ENCODE measurements at regions of chr16 and their contacts with region 1.

Region 1: DNA sequence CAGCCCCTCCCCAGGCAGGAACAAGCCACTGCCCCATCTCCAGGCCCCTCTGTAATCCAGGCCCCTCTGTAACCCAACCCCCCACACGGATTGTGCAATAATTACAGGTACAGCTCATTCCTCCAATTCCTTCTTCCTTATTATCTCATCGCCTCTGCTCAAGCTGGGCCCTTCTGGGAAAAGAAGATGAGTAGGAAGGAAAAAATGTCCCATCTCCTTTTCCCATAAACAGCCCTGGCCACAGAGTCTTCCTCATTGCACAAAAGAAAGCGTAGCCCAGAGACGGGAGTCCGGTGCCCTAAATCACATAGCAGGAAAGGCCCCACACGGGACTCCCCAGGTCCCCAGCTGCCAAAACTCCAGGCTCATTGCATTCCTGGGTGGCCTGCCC is 3.6 kb upstream of the LITAFD start:
- DNase-seq: no peak
- H3K4me3 ChIP-seq: no peak overlapping the region
- H3K27ac ChIP-seq: no peak overlapping the region
- H3K4me1 ChIP-seq: no peaks in the 10 kb centered on the region
- H3K27me3 ChIP-seq: peaks cover 0 to 2% of the 10 kb centered on the region in 2 experiments
- CTCF ChIP-seq: no peak
- POLR2A ChIP-seq: no peak

Region 2: DNA sequence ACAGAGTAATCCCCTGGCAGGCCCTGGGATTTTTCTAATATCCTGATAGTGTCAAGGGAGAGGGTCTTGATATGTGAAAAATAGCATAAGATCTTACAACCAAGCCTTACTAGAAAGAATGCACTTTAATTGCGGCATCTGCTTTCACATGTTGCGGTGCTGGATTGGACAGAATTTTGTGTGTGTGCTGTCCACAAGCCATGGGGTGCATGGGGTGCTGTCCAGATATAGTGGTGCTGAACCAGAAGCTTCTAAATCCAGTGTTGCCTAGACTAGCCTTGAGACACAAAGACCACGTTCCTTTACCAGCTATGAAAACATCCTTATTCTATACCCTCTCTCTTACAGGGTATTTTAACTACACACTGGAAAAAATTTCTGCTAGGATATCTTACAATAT is 532.2 kb before region 1 on chr16:
- CTCF ChIA-PET with region 1: no interaction called
- POLR2A ChIA-PET with region 1: no interaction called
- dilution Hi-C with region 1: no loop called
- intact Hi-C with region 1: no loop called
- DNase-seq: no peak
- H3K4me3 ChIP-seq: no peak overlapping the region
- H3K27ac ChIP-seq: no peak overlapping the region
- H3K4me1 ChIP-seq: no peaks in the 10 kb centered on the region
- H3K27me3 ChIP-seq: no peaks in the 10 kb centered on the region
- CTCF ChIP-seq: no peak
- POLR2A ChIP-seq: no peak

Region 3: GRCh38 chr16:8567750-8568617 is 310.5 kb before region 1 on chr16:
- CTCF ChIA-PET with region 1: interaction called, 16 read pairs
- POLR2A ChIA-PET with region 1: no interaction called
- dilution Hi-C with region 1: no loop called
- intact Hi-C with region 1: loop called (anchors 1 kb)
- DNase-seq: peak; percentile 85
- H3K4me3 ChIP-seq: no peak overlapping the region
- H3K27ac ChIP-seq: no peak overlapping the region
- H3K4me1 ChIP-seq: no peaks in the 10 kb centered on the region
- H3K27me3 ChIP-seq: peaks cover 2 to 3% of the 10 kb centered on the region in 2 experiments
- CTCF ChIP-seq: peak; percentile 87 to 97
- POLR2A ChIP-seq: no peak

Region 4: DNA sequence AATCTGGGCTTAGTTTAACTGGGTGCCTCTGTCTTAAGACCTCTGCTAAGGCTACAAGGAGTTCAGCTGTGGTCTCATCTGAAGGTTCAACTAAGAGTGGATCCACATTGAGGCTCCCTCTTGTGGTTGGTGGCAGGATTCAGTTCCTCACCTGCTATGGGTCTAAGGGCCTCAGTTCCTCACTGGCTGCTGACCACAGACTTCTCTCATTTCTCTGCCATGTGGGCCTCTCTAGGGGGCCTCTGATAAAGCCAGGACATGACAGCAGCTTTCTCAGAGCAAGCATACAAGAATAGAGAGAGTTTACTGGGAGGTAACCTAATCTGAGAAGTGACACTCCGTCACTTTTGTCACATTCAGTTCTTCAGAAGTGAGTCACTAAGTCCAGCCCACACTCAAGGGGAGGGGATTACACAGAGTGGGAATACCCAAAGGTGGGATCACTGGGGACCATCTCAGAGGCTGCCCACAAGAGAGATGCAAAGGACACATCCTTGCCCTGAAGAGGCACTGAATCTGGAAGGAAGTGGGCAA is 223.3 kb before region 1 on chr16:
- CTCF ChIA-PET with region 1: interaction called, 92 read pairs
- POLR2A ChIA-PET with region 1: no interaction called
- dilution Hi-C with region 1: no loop called
- intact Hi-C with region 1: no loop called
- DNase-seq: peak; percentile 13
- H3K4me3 ChIP-seq: no peak overlapping the region
- H3K27ac ChIP-seq: no peak overlapping the region
- H3K4me1 ChIP-seq: no peaks in the 10 kb centered on the region
- H3K27me3 ChIP-seq: peaks cover 0 to 6% of the 10 kb centered on the region in 2 experiments
- CTCF ChIP-seq: peak; percentile 52 to 58
- POLR2A ChIP-seq: no peak

Region 5: DNA sequence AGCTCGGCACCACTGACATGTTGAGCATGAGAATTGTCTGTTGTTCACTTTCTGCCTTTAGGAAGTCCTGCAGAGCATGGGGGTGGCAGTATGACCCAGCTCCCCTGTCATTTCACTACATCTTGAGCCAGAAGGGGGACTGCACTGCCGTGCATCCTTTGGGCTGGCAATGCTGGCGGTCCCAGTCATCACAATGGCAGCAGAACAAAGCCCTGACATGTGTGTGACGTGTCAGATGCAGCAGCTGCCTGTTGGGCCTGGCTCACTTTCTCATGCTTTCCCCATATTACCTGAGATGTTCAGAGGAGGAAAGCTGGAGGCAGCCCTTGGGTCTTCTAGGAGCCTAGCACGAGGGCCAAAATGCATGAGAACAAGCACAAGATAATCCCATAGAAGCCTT is 210.4 kb before region 1 on chr16:
- CTCF ChIA-PET with region 1: interaction called, 92 read pairs
- POLR2A ChIA-PET with region 1: no interaction called
- dilution Hi-C with region 1: no loop called
- intact Hi-C with region 1: no loop called
- DNase-seq: no peak
- H3K4me3 ChIP-seq: no peak overlapping the region
- H3K27ac ChIP-seq: no peak overlapping the region
- H3K4me1 ChIP-seq: no peaks in the 10 kb centered on the region
- H3K27me3 ChIP-seq: no peaks in the 10 kb centered on the region
- CTCF ChIP-seq: no peak
- POLR2A ChIP-seq: no peak

Region 6: DNA sequence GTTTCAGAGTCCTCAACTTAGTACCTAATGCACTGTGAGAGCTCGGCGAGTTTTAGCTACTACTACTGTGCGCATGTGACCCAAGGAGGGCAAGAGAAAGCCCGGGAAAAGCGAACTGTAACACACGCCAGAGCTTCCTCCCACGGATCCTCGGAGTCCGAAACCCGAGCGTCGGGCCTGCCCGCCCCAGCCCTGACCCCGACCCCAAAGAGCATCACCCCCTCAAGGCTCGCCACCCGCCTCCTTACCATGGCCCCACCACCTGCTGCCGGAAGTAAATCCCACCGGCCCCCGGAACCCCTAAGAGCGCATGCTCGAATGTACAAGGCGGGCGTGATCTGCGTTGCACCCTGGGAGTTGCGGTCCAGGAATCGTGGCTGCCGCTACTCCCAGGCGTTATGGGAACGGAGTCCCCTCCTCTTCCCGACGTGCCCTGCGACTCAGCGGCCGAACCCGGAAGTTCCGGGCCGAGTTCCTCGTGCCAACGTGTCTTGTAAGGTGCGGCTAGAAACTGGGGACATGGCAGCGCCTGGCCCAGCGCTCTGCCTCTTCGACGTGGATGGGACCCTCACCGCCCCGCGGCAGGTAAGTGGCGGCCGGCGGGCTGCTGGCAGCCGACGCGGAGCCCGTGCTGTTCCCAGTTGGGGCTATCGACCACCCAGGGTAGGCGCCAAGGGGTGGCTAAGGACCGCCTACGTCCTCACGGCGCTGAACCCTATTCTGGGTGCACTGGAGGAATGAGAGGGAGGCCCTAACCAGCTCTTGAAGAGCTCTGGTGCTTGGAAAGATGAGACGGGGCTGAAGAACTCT is 80.9 kb before region 1 on chr16 and contains the starts of genes PMM2 and TMEM186:
- CTCF ChIA-PET with region 1: interaction called, 18 read pairs
- POLR2A ChIA-PET with region 1: no interaction called
- dilution Hi-C with region 1: no loop called
- intact Hi-C with region 1: no loop called
- DNase-seq: peak; percentile 98
- H3K4me3 ChIP-seq: peak within 1 kb of the TSS; percentile 65 to 95 (median 83)
- H3K27ac ChIP-seq: peak within 1 kb of the TSS; percentile 62
- H3K4me1 ChIP-seq: peaks cover 25% of the 10 kb centered on the region
- H3K27me3 ChIP-seq: no peaks in the 10 kb centered on the region
- CTCF ChIP-seq: no peak
- POLR2A ChIP-seq: peak; percentile 86
- total RNA-seq, gene PMM2: 61.3 and 62.8 TPM in 2 replicates
- total RNA-seq, gene TMEM186: 8.3 and 9.6 TPM in 2 replicates

Region 7: DNA sequence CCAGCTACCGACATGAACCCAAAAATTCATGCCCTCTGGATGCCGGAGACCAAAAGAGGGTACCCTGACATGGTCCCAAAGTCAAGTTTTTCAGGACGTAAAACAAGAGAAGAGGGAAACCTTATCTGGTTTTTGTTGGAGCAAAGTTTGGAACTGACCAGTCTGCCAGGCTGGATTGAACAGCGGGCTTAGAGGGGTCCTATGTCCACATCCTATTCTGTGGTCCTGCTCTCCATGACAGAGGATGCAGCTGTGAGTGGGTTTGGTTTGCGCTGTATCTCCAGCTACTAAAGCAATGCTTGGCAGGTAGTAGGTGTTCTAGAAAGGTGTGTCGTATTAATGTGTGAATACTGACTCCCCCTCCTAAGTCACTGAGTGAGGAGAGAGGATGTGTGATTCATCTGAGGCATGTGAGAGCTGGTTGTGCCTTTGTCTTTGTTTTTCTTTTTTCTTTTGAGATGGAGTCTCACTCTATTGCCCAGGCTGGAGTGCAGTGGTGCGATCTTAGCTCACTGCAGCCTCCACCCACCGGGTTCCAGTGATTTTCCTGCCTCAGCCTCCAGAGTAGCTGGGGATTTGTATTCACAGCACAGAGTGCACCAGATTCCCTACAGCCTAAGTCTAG is 49.9 kb before region 1 on chr16:
- CTCF ChIA-PET with region 1: interaction called, 22 read pairs
- POLR2A ChIA-PET with region 1: no interaction called
- dilution Hi-C with region 1: no loop called
- intact Hi-C with region 1: no loop called
- DNase-seq: peak; percentile 69
- H3K4me3 ChIP-seq: no peak overlapping the region
- H3K27ac ChIP-seq: peak overlapping the region; percentile 36
- H3K4me1 ChIP-seq: peaks cover 18% of the 10 kb centered on the region
- H3K27me3 ChIP-seq: no peaks in the 10 kb centered on the region
- CTCF ChIP-seq: no peak
- POLR2A ChIP-seq: no peak

Region 8: GRCh38 chr16:9134739-9135138 is 256.2 kb after region 1 on chr16:
- CTCF ChIA-PET with region 1: interaction called, 23 read pairs
- POLR2A ChIA-PET with region 1: no interaction called
- dilution Hi-C with region 1: no loop called
- intact Hi-C with region 1: no loop called
- DNase-seq: peak; percentile 47
- H3K4me3 ChIP-seq: no peak overlapping the region
- H3K27ac ChIP-seq: no peak overlapping the region
- H3K4me1 ChIP-seq: no peaks in the 10 kb centered on the region
- H3K27me3 ChIP-seq: no peaks in the 10 kb centered on the region
- CTCF ChIP-seq: peak; percentile 57 to 70
- POLR2A ChIP-seq: no peak

Measured in endothelial cell of umbilical vein (primary cell).